ENCODE measurements at regions of chr6 and their contacts with region 1.

Region 1: DNA sequence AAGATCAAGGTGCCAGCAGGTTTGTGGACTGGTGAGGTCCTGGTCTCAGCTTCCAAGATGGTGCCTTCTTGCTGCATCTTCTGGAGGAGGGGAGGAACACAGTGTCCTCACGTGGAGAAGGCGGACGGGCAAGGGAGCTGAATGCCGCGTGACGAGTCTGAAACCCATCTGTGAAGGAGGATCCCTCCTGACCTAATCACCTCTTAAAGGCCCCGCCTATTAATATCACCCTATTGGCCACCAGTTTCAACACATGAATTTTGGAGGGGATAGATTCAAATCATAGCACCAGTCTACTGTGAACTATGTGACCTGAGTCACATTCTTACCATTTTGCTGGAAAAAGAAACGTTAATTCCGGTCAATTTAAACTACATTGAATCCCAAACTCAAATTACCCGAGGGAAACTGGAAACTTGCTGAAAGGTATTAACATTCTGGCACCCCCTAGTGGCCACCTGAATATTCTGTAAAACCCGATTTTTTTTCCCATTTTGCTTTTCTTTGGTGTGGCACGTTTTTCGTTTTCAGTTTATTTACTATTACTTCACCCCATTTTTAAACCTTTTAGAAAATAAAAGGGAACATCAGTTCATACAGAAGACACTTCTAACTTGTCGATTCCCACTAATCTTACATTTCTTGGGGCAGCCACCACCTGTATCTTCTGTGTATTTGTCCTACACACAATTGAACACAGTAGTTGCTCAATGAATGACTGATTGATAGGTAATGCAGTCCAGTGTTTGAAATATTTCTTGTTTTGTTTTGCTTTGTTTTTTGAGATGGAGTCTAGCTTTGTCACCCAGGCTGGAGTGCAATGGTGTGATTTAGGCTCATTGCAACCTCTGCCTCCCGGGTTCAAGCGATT is 17.9 kb upstream of the CCDC170 start:
- DNase-seq: peak; percentile 30
- H3K4me3 ChIP-seq: no peak overlapping the region
- H3K27ac ChIP-seq: no peak overlapping the region
- H3K4me1 ChIP-seq: no peaks in the 10 kb centered on the region
- H3K27me3 ChIP-seq: no peaks in the 10 kb centered on the region
- CTCF ChIP-seq: peak; percentile 54 to 86 (median 66)
- EP300 ChIP-seq: no peak
- POLR2A ChIP-seq: no peak

Region 2: GRCh38 chr6:150977281-150977680 is 498.6 kb before region 1 on chr6:
- in situ Hi-C with region 1: no loop called
- intact Hi-C with region 1: loop called (anchors 10 kb)
- DNase-seq: no peak
- H3K4me3 ChIP-seq: no peak overlapping the region
- H3K27ac ChIP-seq: no peak overlapping the region
- H3K4me1 ChIP-seq: no peaks in the 10 kb centered on the region
- H3K27me3 ChIP-seq: no peaks in the 10 kb centered on the region
- CTCF ChIP-seq: no peak
- EP300 ChIP-seq: no peak
- POLR2A ChIP-seq: no peak

Region 3: DNA sequence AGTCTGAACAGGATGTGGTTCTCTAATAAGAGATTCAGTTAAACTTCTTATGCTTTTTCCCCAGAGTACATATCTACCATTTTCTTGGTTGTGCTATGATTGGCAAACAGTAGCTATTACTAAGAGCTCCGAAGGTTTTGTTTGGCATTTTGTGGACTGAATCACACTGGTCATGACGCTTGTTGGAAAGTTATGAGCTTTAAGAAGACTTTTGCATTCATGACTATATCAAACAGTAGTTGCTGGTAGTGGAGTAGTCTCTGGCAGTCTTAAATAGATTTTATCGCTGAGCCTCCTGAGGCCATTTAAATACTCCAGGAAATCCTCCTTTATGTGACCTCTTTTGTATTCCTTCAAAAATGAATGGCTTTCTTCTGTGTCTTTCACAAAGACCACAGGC is 58.7 kb after region 1 on chr6:
- in situ Hi-C with region 1: no loop called
- intact Hi-C with region 1: no loop called
- DNase-seq: no peak
- H3K4me3 ChIP-seq: no peak overlapping the region
- H3K27ac ChIP-seq: no peak overlapping the region
- H3K4me1 ChIP-seq: peaks cover 0 to 5% (median 0%) of the 10 kb centered on the region in 4 donors
- H3K27me3 ChIP-seq: no peaks in the 10 kb centered on the region
- CTCF ChIP-seq: no peak
- EP300 ChIP-seq: no peak
- POLR2A ChIP-seq: no peak